Cardiac septum (tissue), 1 donor: ENCODE measurements at regions of chr2 and their contacts with region 1.

Region 1: GRCh38 chr2:28392297-28393113 is at the start of gene FOSL2:
- DNase-seq: peak; percentile 98
- total RNA-seq, gene FOSL2: 65.4 TPM

Region 2: GRCh38 chr2:27735263-27735953 is 657.1 kb before region 1 on chr2:
- intact Hi-C with region 1: loop called (anchors 5 kb)
- DNase-seq: peak; percentile 92

Region 3: GRCh38 chr2:27798948-27799645 is 593.4 kb before region 1 on chr2:
- intact Hi-C with region 1: loop called (anchors 2 kb)
- DNase-seq: no peak

Region 4: GRCh38 chr2:27954771-27955383 is 437.6 kb before region 1 on chr2:
- intact Hi-C with region 1: loop called (anchors 2 kb)
- DNase-seq: no peak

Region 5: GRCh38 chr2:28164280-28164801 is 228.2 kb before region 1 on chr2:
- intact Hi-C with region 1: loop called (anchors 5 kb)
- DNase-seq: no peak

Region 6: DNA sequence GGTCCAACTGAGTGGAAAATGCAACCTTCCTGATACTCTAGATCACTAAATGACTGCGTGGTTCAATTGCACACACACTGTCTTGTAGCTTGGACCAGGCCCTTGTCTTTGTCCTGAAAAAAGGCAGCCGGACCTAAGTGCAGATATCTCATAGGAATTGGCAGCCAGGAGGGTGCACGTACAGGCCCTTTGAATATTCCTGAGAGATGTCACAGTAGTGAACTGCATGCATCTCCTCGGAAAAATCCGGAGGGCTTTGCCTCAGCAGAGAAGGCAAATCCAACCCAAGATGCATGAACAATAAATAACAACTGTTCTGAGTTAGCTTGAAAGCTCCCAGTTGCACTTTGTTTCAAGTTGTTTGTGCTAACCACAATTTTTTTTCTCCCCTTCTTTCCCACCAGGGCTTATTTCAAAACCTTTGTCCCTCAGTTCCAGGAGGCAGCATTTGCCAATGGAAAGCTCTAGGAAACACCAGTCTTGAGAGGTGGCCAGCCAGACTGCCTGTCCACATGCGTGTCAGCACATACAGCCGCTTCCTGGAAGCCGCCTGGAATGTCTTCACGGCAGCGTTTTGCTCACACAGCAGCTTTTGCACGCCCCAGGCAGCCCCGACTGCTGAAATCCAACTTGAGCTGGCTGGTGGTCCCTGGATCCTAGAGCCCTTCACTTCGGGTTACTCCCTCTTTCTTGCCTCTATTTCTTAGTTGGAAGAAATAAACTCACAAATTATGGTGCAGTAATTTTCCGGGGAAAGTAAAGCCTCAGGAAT is 54.3 kb before region 1 on chr2:
- intact Hi-C with region 1: loop called (anchors 1 kb)
- DNase-seq: no peak

Region 7: GRCh38 chr2:28350791-28351285 is 41.7 kb before region 1 on chr2:
- intact Hi-C with region 1: no loop called
- DNase-seq: no peak